ENCODE measurements at regions of chr3 and their contacts with region 1.

Region 1: GRCh38 chr3:152444029-152444641 is 175.4 kb downstream of the MBNL1 start:
- DNase-seq: no peak
- ATAC-seq: no peak
- H3K4me3 Mint-ChIP-seq: no peak overlapping the region
- H3K27ac Mint-ChIP-seq: no peak overlapping the region
- H3K4me1 Mint-ChIP-seq: peaks cover 15% of the 10 kb centered on the region
- H3K27me3 Mint-ChIP-seq: no peaks in the 10 kb centered on the region
- CTCF ChIP-seq: peak; percentile 46; the same call in 1 of the 2 replicates

Region 2: GRCh38 chr3:152183473-152183872 is 260.7 kb before region 1 on chr3:
- CTCF ChIA-PET with region 1: interaction called, 42 read pairs
- POLR2A ChIA-PET with region 1: no interaction called
- DNase-seq: peak; percentile 43
- ATAC-seq: peak; percentile 99
- H3K4me3 Mint-ChIP-seq: no peak overlapping the region
- H3K27ac Mint-ChIP-seq: no peak overlapping the region
- H3K4me1 Mint-ChIP-seq: no peaks in the 10 kb centered on the region
- H3K27me3 Mint-ChIP-seq: no peaks in the 10 kb centered on the region
- CTCF ChIP-seq: no peak

Region 3: GRCh38 chr3:152706991-152707713 is 263.0 kb after region 1 on chr3:
- CTCF ChIA-PET with region 1: no interaction called
- POLR2A ChIA-PET with region 1: no interaction called
- DNase-seq: no peak
- ATAC-seq: no peak
- H3K4me3 Mint-ChIP-seq: no peak overlapping the region
- H3K27ac Mint-ChIP-seq: no peak overlapping the region
- H3K4me1 Mint-ChIP-seq: peaks cover 29% of the 10 kb centered on the region
- H3K27me3 Mint-ChIP-seq: peaks cover 3% of the 10 kb centered on the region
- CTCF ChIP-seq: no peak

Measured in WTC11 (cell line).